ENCODE measurements at regions of chr12 and their contacts with region 1.

Region 1: GRCh38 chr12:123075646-123076171 is 75.2 kb downstream of the PITPNM2 start:
- DNase-seq: peak; percentile 79
- ATAC-seq: peak; percentile 82
- H3K4me3 Mint-ChIP-seq: peak overlapping the region; percentile 84
- H3K27ac Mint-ChIP-seq: peak overlapping the region; percentile 97
- H3K4me1 Mint-ChIP-seq: peaks cover 45% of the 10 kb centered on the region
- H3K27me3 Mint-ChIP-seq: no peaks in the 10 kb centered on the region

Region 2: GRCh38 chr12:122980183-122981046 is 95.3 kb before region 1 on chr12 and contains the start of gene ARL6IP4:
- POLR2A ChIA-PET with region 1: interaction called, 18 read pairs
- DNase-seq: peak; percentile 87
- ATAC-seq: peak; percentile 78
- H3K4me3 Mint-ChIP-seq: peak within 1 kb of the TSS; percentile 93
- H3K27ac Mint-ChIP-seq: peak within 1 kb of the TSS; percentile 88
- H3K4me1 Mint-ChIP-seq: peaks cover 42% of the 10 kb centered on the region
- H3K27me3 Mint-ChIP-seq: no peaks in the 10 kb centered on the region
- total RNA-seq, gene ARL6IP4: 204 to 211 TPM

Region 3: GRCh38 chr12:123064885-123065619 is 10.7 kb before region 1 on chr12:
- POLR2A ChIA-PET with region 1: interaction called, 13 read pairs
- DNase-seq: no peak
- ATAC-seq: no peak
- H3K4me3 Mint-ChIP-seq: no peak overlapping the region
- H3K27ac Mint-ChIP-seq: peak overlapping the region; percentile 77
- H3K4me1 Mint-ChIP-seq: peaks cover 36% of the 10 kb centered on the region
- H3K27me3 Mint-ChIP-seq: no peaks in the 10 kb centered on the region

Region 4: DNA sequence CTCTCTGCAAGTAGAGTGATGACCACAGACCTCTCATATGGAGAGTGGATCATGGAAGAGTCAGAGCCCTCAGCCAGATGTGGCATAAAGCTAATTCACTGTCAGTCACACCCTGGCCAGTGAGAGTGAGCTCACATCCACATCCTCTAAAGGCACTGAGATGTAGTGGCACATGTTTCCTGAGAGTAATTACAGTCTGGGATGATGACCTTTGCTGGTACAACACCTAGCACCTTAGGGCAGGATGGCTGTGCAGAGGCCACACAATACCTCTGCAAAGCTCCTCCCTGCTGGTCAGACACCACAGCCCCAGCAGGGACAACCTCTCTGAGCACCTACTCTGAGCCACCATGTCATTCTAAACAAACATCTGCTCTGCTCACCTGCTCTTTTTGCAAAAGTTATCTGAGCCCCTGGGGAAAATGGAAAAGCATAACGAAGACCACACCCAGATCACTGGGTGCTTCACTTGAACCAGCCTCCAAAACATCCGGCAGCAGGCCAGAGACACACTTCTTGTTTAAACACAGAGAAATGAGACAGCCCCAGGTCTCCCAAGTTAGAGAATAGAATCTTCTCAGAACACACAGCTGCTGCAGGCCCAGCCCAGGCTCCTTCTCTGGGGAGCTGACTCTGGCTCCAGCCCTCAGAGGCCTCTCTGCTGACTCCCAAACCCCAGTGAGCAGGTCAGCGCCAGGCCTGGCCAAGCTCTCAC is 44.9 kb after region 1 on chr12:
- POLR2A ChIA-PET with region 1: interaction called, 45 read pairs
- DNase-seq: no peak
- ATAC-seq: peak; percentile 79
- H3K4me3 Mint-ChIP-seq: peak overlapping the region; percentile 51
- H3K27ac Mint-ChIP-seq: peak overlapping the region; percentile 88
- H3K4me1 Mint-ChIP-seq: peaks cover 47% of the 10 kb centered on the region
- H3K27me3 Mint-ChIP-seq: no peaks in the 10 kb centered on the region

Region 5: GRCh38 chr12:123150744-123151456 is 75.2 kb after region 1 on chr12 and contains the start of gene PITPNM2:
- POLR2A ChIA-PET with region 1: interaction called, 36 read pairs
- DNase-seq: peak; percentile 83
- ATAC-seq: peak; percentile 89
- H3K4me3 Mint-ChIP-seq: peak within 1 kb of the TSS; percentile 87
- H3K27ac Mint-ChIP-seq: peak within 1 kb of the TSS; percentile 80
- H3K4me1 Mint-ChIP-seq: peaks cover 30% of the 10 kb centered on the region
- H3K27me3 Mint-ChIP-seq: peaks cover 3% of the 10 kb centered on the region
- total RNA-seq, gene PITPNM2: 15.2 to 18.1 TPM